SK-N-SH (cell line): ENCODE measurements at regions of chr14 and their contacts with region 1.

Region 1: GRCh38 chr14:88189417-88190191 is 133.5 kb downstream of the KCNK10 start:
- DNase-seq: peak; percentile 72
- H3K4me3 ChIP-seq: peak overlapping the region in 1 of 2 experiments; percentile 44; a peak in 1 of 4 replicates
- H3K27ac ChIP-seq: no peak overlapping the region
- H3K4me1 ChIP-seq: no peaks in the 10 kb centered on the region; a peak in 1 of 4 replicates
- H3K27me3 ChIP-seq: no peaks in the 10 kb centered on the region; the same call in 1 of the 2 replicates
- CTCF ChIP-seq: peak; percentile 70
- EP300 ChIP-seq: no peak
- RAD21 ChIP-seq: peak; percentile 85

Region 2: DNA sequence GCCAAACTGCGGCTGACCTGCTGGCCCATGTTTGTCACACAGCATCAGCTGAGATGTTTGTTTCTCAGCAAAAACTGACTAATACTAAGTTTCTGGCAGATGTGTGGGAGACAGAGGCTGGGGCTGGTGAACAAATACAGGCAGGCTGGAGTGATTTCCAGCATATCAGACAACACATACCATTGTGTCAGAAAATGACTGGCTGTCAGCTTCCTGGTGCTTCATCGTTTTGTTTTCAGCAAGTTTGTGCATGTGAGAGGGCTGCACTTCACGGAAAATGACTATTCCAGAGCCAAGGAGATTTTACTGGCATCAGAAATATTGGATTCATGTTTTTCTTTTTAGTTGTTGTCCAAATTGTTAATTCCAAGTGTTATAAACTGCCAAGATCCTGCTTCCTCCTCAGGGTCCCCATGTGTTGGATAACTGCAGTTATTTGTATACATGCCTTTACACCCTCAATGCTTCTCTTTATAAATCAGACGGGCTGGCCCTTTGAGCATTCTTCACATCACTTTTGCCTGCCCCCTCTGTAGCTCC is 342.3 kb before region 1 on chr14:
- CTCF ChIA-PET with region 1: no interaction called
- POLR2A ChIA-PET with region 1: no interaction called
- DNase-seq: no peak
- H3K4me3 ChIP-seq: no peak overlapping the region
- H3K27ac ChIP-seq: no peak overlapping the region
- H3K4me1 ChIP-seq: no peaks in the 10 kb centered on the region
- H3K27me3 ChIP-seq: no peaks in the 10 kb centered on the region
- CTCF ChIP-seq: no peak
- EP300 ChIP-seq: no peak
- RAD21 ChIP-seq: no peak

Region 3: GRCh38 chr14:88013750-88014349 is 175.8 kb before region 1 on chr14:
- CTCF ChIA-PET with region 1: interaction called, 24 read pairs
- POLR2A ChIA-PET with region 1: no interaction called
- DNase-seq: peak; percentile 53
- H3K4me3 ChIP-seq: peak overlapping the region in 1 of 2 experiments; percentile 4; a peak in 1 of 4 replicates
- H3K27ac ChIP-seq: no peak overlapping the region
- H3K4me1 ChIP-seq: no peaks in the 10 kb centered on the region
- H3K27me3 ChIP-seq: no peaks in the 10 kb centered on the region
- CTCF ChIP-seq: peak; percentile 91
- EP300 ChIP-seq: no peak
- RAD21 ChIP-seq: peak; percentile 85

Region 4: DNA sequence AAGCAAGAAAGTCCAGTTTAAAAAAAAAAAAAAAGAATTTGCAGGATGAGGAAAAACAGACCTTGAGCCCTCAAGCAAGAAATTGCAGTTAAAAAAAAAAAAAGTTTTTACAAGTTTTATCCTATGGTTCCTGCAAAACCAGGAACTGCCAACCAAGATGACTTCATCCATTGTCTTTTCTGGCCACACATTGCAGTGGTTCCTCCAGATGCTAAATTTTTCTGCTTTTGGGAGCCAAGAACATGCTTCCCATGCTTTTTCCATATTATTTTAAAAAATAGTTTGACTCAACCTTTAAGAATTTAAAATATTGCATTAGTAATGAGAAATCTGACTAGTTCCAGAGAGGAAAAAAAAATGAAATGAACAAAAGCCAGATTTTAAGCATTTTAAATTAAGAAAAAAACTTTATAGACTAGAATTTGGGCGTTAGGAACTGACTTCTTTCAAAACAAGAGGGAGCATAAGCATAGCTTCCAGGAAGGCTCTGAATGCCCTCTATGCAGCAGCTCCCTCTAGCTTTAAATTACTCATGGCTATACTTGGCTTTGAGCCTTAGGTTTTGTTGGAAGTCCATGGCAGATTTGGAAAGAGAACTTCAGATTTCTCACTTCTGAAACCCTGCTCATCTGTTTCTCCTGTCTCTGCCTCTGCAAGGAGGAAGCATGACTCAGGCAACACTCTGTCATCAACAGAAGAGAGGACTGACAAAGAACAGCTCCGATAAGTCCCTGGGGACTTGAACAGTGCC is 60.1 kb before region 1 on chr14:
- CTCF ChIA-PET with region 1: no interaction called
- POLR2A ChIA-PET with region 1: no interaction called
- DNase-seq: no peak
- H3K4me3 ChIP-seq: no peak overlapping the region
- H3K27ac ChIP-seq: peak overlapping the region in 1 of 2 experiments; percentile 66; a peak in 2 of 4 replicates
- H3K4me1 ChIP-seq: no peaks in the 10 kb centered on the region
- H3K27me3 ChIP-seq: no peaks in the 10 kb centered on the region
- CTCF ChIP-seq: peak; percentile 27; the same call in 1 of the 2 replicates
- EP300 ChIP-seq: no peak
- RAD21 ChIP-seq: no peak

Region 5: GRCh38 chr14:88204214-88204613 is 14.6 kb after region 1 on chr14:
- CTCF ChIA-PET with region 1: interaction called, 60 read pairs
- POLR2A ChIA-PET with region 1: no interaction called
- DNase-seq: no peak
- H3K4me3 ChIP-seq: no peak overlapping the region
- H3K27ac ChIP-seq: no peak overlapping the region
- H3K4me1 ChIP-seq: peaks cover 0 to 3% of the 10 kb centered on the region in 2 experiments; a peak in 1 of 4 replicates
- H3K27me3 ChIP-seq: no peaks in the 10 kb centered on the region
- CTCF ChIP-seq: no peak
- EP300 ChIP-seq: no peak
- RAD21 ChIP-seq: no peak

Region 6: DNA sequence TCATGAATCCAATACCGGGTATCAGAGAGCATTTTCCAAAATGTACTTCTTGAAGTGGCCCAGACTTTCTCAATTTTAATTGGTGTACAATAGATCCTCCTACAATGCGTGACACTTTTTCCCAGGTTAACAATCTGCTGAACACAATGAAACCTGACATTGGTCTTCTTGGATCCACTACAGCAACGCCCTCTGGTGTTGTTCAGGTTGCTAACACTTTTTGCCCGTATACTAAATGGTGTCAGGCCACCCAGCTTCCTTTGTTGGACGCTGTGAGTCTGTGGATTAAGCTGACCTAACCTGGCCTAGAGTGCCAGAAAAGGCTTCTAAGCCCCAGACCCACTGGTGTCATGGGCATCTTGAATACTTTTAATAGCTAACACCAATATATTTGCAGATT is 44.3 kb after region 1 on chr14:
- CTCF ChIA-PET with region 1: interaction called, 21 read pairs
- POLR2A ChIA-PET with region 1: no interaction called
- DNase-seq: peak; percentile 25
- H3K4me3 ChIP-seq: no peak overlapping the region; a peak in 1 of 4 replicates
- H3K27ac ChIP-seq: no peak overlapping the region
- H3K4me1 ChIP-seq: no peaks in the 10 kb centered on the region
- H3K27me3 ChIP-seq: no peaks in the 10 kb centered on the region
- CTCF ChIP-seq: peak; percentile 35
- EP300 ChIP-seq: no peak
- RAD21 ChIP-seq: peak; percentile 41

Region 7: GRCh38 chr14:88266474-88266873 is 76.9 kb after region 1 on chr14:
- CTCF ChIA-PET with region 1: no interaction called
- POLR2A ChIA-PET with region 1: no interaction called
- DNase-seq: no peak
- H3K4me3 ChIP-seq: no peak overlapping the region
- H3K27ac ChIP-seq: no peak overlapping the region
- H3K4me1 ChIP-seq: no peaks in the 10 kb centered on the region
- H3K27me3 ChIP-seq: no peaks in the 10 kb centered on the region
- CTCF ChIP-seq: no peak
- EP300 ChIP-seq: no peak
- RAD21 ChIP-seq: no peak

Region 8: GRCh38 chr14:88323523-88324199 is 134.1 kb after region 1 on chr14:
- CTCF ChIA-PET with region 1: interaction called, 12 read pairs
- POLR2A ChIA-PET with region 1: no interaction called
- DNase-seq: peak; percentile 82
- H3K4me3 ChIP-seq: peak overlapping the region; percentile 35 to 40; a peak in 3 of 4 replicates
- H3K27ac ChIP-seq: no peak overlapping the region
- H3K4me1 ChIP-seq: no peaks in the 10 kb centered on the region; a peak in 1 of 4 replicates
- H3K27me3 ChIP-seq: peaks cover 32% of the 10 kb centered on the region
- CTCF ChIP-seq: no peak
- EP300 ChIP-seq: no peak
- RAD21 ChIP-seq: no peak

Region 9: GRCh38 chr14:88385345-88386101 is 195.9 kb after region 1 on chr14 and contains the start of gene SPATA7:
- CTCF ChIA-PET with region 1: interaction called, 135 read pairs
- POLR2A ChIA-PET with region 1: no interaction called
- DNase-seq: peak; percentile 92
- H3K4me3 ChIP-seq: peak within 1 kb of the TSS; percentile 85 to 97
- H3K27ac ChIP-seq: peak within 1 kb of the TSS; percentile 57 to 85; a peak in 3 of 4 replicates
- H3K4me1 ChIP-seq: peaks cover 0 to 8% of the 10 kb centered on the region in 2 experiments; a peak in 2 of 4 replicates
- H3K27me3 ChIP-seq: no peaks in the 10 kb centered on the region
- CTCF ChIP-seq: 0 out of 2 replicates have a peak, but pooled peaks have one; percentile 8
- EP300 ChIP-seq: peak in 1 of 2 experiments; percentile 19; a peak in 1 of 4 replicates
- RAD21 ChIP-seq: no peak
- polyA plus RNA-seq, gene SPATA7: 3.5 and 4.5 TPM in 2 replicates